Right ventricle myocardium superior (tissue), 1 donor: ENCODE measurements at regions of chr11 and their contacts with region 1.

Region 1: GRCh38 chr11:22787551-22788162 is 41.9 kb downstream of the SVIP start:
- DNase-seq: no peak
- ATAC-seq: peak; percentile 71

Region 2: DNA sequence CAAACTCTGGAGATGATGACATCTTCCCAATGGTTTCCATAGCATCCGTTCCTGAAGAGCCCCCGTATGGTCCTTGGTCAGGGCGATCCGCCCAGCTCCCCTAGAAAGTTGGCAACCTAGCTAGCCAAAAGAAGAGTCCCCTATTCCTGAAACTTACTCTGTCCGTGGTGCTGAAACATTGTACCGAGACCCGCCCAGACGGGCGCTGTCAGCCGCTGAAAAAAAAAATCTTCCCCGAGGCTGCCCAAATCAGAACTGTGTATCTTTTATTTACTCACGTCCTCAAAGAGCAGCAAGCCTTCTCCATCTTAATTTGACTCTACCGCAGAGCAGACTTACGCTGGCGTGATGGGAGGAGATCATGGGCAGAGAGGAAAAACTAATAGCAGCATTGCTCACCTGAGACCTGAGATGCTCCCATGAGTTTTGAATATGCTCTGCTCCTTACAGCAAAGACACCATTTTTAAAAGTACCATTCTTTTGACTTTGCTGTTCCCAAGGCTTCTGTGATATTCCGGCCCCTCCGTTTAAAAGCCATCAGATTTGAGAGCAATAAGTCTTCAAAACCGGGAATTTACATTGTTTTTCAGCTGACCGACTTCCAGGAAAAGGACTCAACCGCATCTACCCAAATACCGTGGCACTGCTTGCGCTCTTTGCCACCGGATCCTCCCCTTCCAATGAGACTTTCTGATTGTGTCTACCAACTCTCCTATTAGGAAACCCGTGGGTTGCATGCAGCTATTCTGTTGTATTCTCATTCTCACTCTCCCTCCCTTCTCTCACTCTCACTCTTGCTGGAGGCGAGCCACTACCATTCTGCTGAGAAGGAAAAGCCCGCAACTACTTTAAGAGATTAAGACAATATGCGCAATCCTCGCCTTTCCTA is 449.8 kb before region 1 on chr11 and contains the start of gene SLC17A6:
- intact Hi-C with region 1: loop called (anchors 2 kb)
- DNase-seq: no peak
- ATAC-seq: no peak
- total RNA-seq, gene SLC17A6: not detected

Region 3: GRCh38 chr11:22625448-22626287 is 162.0 kb before region 1 on chr11 and contains the start of gene FANCF:
- intact Hi-C with region 1: loop called (anchors 10 kb)
- DNase-seq: peak; percentile 92
- ATAC-seq: peak; percentile 99
- total RNA-seq, gene FANCF: 4.1 TPM

Region 4: GRCh38 chr11:23233075-23233474 is 445.4 kb after region 1 on chr11:
- intact Hi-C with region 1: no loop called
- DNase-seq: no peak
- ATAC-seq: no peak